ENCODE measurements at regions of chr9 and their contacts with region 1.

Region 1: GRCh38 chr9:129482521-129483414 is 138.1 kb downstream of the C9orf50 start:
- DNase-seq: peak; percentile 93 to 94
- ATAC-seq: peak; percentile 82
- H3K4me3 ChIP-seq: peak overlapping the region; percentile 15 to 30
- H3K27ac ChIP-seq: peak overlapping the region; percentile 99
- H3K4me1 ChIP-seq: no peaks in the 10 kb centered on the region
- H3K27me3 ChIP-seq: no peaks in the 10 kb centered on the region

Region 2: DNA sequence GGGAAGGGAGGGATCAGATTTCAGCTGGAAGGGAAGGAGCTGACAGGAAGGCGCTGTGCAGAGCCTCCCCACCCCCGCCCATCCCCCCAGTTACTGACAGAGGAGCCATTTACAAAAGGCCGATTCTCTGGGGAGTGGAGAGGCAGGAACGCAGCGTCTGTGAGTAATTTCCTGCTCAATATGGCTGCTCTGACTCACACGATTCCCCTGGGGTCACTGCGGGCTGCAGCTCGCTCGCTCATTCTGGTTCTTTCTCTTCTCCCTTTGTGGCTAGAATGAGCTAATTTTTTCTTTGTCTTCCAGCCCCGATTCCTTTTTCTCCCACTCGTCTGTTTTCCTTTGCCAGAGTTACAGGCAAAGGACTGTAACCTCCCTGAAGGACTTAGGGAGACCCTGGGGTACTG is 342.8 kb before region 1 on chr9:
- intact Hi-C with region 1: loop called in 1 of 2 experiments (anchors 2 kb)
- DNase-seq: peak; percentile 96
- ATAC-seq: peak; percentile 89
- H3K4me3 ChIP-seq: no peak overlapping the region
- H3K27ac ChIP-seq: peak overlapping the region; percentile 99 to 100
- H3K4me1 ChIP-seq: peaks cover 0 to 4% of the 10 kb centered on the region in 2 donors
- H3K27me3 ChIP-seq: no peaks in the 10 kb centered on the region

Region 3: GRCh38 chr9:129333953-129334724 is 148.6 kb before region 1 on chr9:
- intact Hi-C with region 1: loop called (anchors 1 to 5 kb)
- DNase-seq: peak; percentile 96 to 98
- ATAC-seq: peak; percentile 93
- H3K4me3 ChIP-seq: no peak overlapping the region
- H3K27ac ChIP-seq: peak overlapping the region; percentile 46 to 99
- H3K4me1 ChIP-seq: no peaks in the 10 kb centered on the region
- H3K27me3 ChIP-seq: no peaks in the 10 kb centered on the region

Region 4: GRCh38 chr9:129413537-129414376 is 69.0 kb before region 1 on chr9:
- intact Hi-C with region 1: loop called (anchors 1 to 5 kb)
- DNase-seq: peak; percentile 100
- ATAC-seq: peak; percentile 94
- H3K4me3 ChIP-seq: peak overlapping the region; percentile 32 to 55
- H3K27ac ChIP-seq: peak overlapping the region; percentile 95 to 98
- H3K4me1 ChIP-seq: peaks cover 0 to 3% of the 10 kb centered on the region in 2 donors
- H3K27me3 ChIP-seq: no peaks in the 10 kb centered on the region

Region 5: GRCh38 chr9:129460323-129461261 is 22.2 kb before region 1 on chr9:
- intact Hi-C with region 1: loop called in 1 of 2 experiments (anchors 1 kb)
- DNase-seq: peak; percentile 98 to 99
- ATAC-seq: peak; percentile 94
- H3K4me3 ChIP-seq: peak overlapping the region in 1 of 2 donors; percentile 12
- H3K27ac ChIP-seq: peak overlapping the region; percentile 54 to 88
- H3K4me1 ChIP-seq: no peaks in the 10 kb centered on the region
- H3K27me3 ChIP-seq: no peaks in the 10 kb centered on the region

Region 6: GRCh38 chr9:129567842-129568559 is 85.2 kb after region 1 on chr9:
- intact Hi-C with region 1: no loop called
- DNase-seq: peak; percentile 80 to 84
- ATAC-seq: peak; percentile 63
- H3K4me3 ChIP-seq: peak overlapping the region in 1 of 2 donors; percentile 29
- H3K27ac ChIP-seq: peak overlapping the region in 1 of 2 donors; percentile 58
- H3K4me1 ChIP-seq: no peaks in the 10 kb centered on the region
- H3K27me3 ChIP-seq: no peaks in the 10 kb centered on the region

Measured in aorta (tissue), 5 donors.